ENCODE measurements at regions of chr15 and their contacts with region 1.

Region 1: GRCh38 chr15:64093627-64094417 is at the start of gene CIAO2A:
- DNase-seq: peak; percentile 96
- ATAC-seq: peak; percentile 70
- H3K4me3 ChIP-seq: peak within 1 kb of the TSS; percentile 76 to 94 (median 84)
- H3K4me3 Mint-ChIP-seq: peak within 1 kb of the TSS; percentile 97
- H3K27ac ChIP-seq: peak within 1 kb of the TSS; percentile 90 to 95
- H3K27ac Mint-ChIP-seq: peak within 1 kb of the TSS; percentile 98
- H3K4me1 ChIP-seq: peaks cover 79% of the 10 kb centered on the region in 2 donors
- H3K4me1 Mint-ChIP-seq: peaks cover 82% of the 10 kb centered on the region
- H3K27me3 ChIP-seq: no peaks in the 10 kb centered on the region
- H3K27me3 Mint-ChIP-seq: no peaks in the 10 kb centered on the region
- CTCF ChIP-seq: no peak
- total RNA-seq, gene CIAO2A: 64.4 and 68.2 TPM in 2 replicates

Region 2: DNA sequence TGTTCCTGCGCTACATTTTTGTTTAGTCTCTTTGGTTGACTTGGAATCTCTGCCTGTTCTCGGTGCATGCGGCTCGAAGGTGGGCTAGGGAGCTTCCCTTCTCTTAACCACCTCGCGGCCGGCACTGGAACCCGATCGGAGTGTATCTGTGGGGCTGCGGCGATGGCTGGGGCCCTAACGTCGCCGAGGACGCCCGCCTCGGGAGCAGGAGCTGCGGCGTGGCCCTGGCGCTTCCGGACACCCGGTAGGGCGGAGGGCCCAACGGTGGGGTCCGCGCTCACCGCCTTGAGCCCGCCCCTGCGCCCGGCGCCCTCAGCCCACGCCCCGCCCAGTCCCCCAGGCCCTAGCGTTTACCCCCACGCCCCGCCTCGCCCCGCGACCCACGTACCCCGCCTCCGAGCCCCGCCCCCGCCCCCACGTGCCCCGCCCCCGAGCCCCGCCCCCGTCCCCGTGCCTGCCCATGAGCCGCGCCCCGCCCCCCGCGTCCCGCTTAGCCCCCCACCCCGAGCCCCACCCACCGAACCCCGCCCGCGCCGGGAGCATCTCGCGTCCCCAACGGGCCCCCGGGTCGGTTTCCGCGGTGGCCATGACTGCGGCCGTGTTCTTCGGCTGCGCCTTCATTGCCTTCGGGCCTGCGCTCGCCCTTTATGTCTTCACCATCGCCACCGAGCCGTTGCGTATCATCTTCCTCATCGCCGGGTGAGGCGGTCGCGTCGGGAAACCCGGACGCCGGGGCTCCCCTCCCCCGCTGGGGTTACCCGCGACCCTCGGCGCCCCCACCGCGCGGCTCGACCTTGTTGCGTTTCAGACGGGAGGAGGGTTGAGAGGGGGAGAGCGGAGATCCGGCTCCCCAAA is 816.6 kb before region 1 on chr15 and contains the start of gene APH1B:
- CTCF ChIA-PET with region 1: no interaction called
- POLR2A ChIA-PET with region 1: no interaction called
- intact Hi-C with region 1: loop called (anchors 10 kb)
- DNase-seq: peak; percentile 85
- ATAC-seq: peak; percentile 97
- H3K4me3 ChIP-seq: peak within 1 kb of the TSS; percentile 74 to 98 (median 94)
- H3K4me3 Mint-ChIP-seq: peak within 1 kb of the TSS; percentile 92
- H3K27ac ChIP-seq: peak within 1 kb of the TSS; percentile 67 to 79
- H3K27ac Mint-ChIP-seq: peak within 1 kb of the TSS; percentile 94
- H3K4me1 ChIP-seq: peaks cover 12 to 14% of the 10 kb centered on the region in 2 donors
- H3K4me1 Mint-ChIP-seq: peaks cover 19% of the 10 kb centered on the region
- H3K27me3 ChIP-seq: no peaks in the 10 kb centered on the region
- H3K27me3 Mint-ChIP-seq: no peaks in the 10 kb centered on the region
- CTCF ChIP-seq: no peak
- total RNA-seq, gene APH1B: 45.2 and 47.0 TPM in 2 replicates

Region 3: GRCh38 chr15:63449731-63450130 is 644.1 kb before region 1 on chr15:
- CTCF ChIA-PET with region 1: no interaction called
- POLR2A ChIA-PET with region 1: no interaction called
- intact Hi-C with region 1: no loop called
- DNase-seq: no peak
- ATAC-seq: no peak
- H3K4me3 ChIP-seq: no peak overlapping the region
- H3K4me3 Mint-ChIP-seq: no peak overlapping the region
- H3K27ac ChIP-seq: no peak overlapping the region
- H3K27ac Mint-ChIP-seq: no peak overlapping the region
- H3K4me1 ChIP-seq: peaks cover 0 to 3% of the 10 kb centered on the region in 2 donors
- H3K4me1 Mint-ChIP-seq: peaks cover 3% of the 10 kb centered on the region
- H3K27me3 ChIP-seq: no peaks in the 10 kb centered on the region
- H3K27me3 Mint-ChIP-seq: peaks cover 2% of the 10 kb centered on the region
- CTCF ChIP-seq: no peak

Region 4: GRCh38 chr15:63600616-63601025 is 493.2 kb before region 1 on chr15:
- CTCF ChIA-PET with region 1: no interaction called
- POLR2A ChIA-PET with region 1: no interaction called
- intact Hi-C with region 1: loop called (anchors 5 kb)
- DNase-seq: peak; percentile 96
- ATAC-seq: peak; percentile 76
- H3K4me3 ChIP-seq: peak overlapping the region in 4 of 5 experiments; percentile 67 to 86 (median 74)
- H3K4me3 Mint-ChIP-seq: peak overlapping the region; percentile 96
- H3K27ac ChIP-seq: peak overlapping the region; percentile 65 to 76
- H3K27ac Mint-ChIP-seq: peak overlapping the region; percentile 96
- H3K4me1 ChIP-seq: peaks cover 44 to 57% of the 10 kb centered on the region in 2 donors
- H3K4me1 Mint-ChIP-seq: peaks cover 73% of the 10 kb centered on the region
- H3K27me3 ChIP-seq: no peaks in the 10 kb centered on the region
- H3K27me3 Mint-ChIP-seq: no peaks in the 10 kb centered on the region
- CTCF ChIP-seq: no peak

Region 5: DNA sequence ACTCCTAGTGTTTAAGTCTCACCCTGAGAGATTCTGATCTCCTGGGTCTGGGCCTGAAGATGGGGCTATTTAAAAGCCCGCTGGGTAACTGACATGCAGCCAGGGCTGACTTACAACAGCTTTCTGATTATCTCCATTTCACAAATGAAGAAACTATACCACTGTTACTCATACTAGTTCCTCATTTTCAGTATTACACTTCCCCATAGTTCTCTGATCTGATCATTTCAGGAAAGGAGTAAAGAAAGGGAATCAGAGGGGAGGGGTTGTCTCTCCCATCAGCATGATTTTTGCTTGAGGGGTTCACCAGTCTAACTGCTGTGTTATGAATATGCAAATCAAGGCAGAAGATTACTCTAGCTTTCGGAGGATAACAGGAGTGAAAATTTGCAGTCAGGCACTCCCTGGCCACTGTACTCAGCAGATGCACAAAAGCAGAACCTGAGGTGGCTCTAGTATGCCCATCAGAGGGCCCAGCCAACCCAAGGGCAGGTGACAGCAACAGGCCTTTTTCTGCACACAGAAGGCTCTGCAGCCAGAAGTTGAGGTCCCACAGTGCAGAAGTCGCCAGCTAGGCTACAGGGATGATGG is 107.0 kb before region 1 on chr15:
- CTCF ChIA-PET with region 1: no interaction called
- POLR2A ChIA-PET with region 1: no interaction called
- intact Hi-C with region 1: no loop called
- DNase-seq: peak; percentile 79
- ATAC-seq: peak; percentile 90
- H3K4me3 ChIP-seq: no peak overlapping the region
- H3K4me3 Mint-ChIP-seq: peak overlapping the region; percentile 70
- H3K27ac ChIP-seq: peak overlapping the region; percentile 57 to 63
- H3K27ac Mint-ChIP-seq: peak overlapping the region; percentile 96
- H3K4me1 ChIP-seq: peaks cover 46 to 56% of the 10 kb centered on the region in 2 donors
- H3K4me1 Mint-ChIP-seq: peaks cover 62% of the 10 kb centered on the region
- H3K27me3 ChIP-seq: no peaks in the 10 kb centered on the region
- H3K27me3 Mint-ChIP-seq: no peaks in the 10 kb centered on the region
- CTCF ChIP-seq: no peak

Region 6: GRCh38 chr15:64010719-64011118 is 83.1 kb before region 1 on chr15:
- CTCF ChIA-PET with region 1: interaction called, 7 read pairs
- POLR2A ChIA-PET with region 1: no interaction called
- intact Hi-C with region 1: loop called (anchors 1 kb)
- DNase-seq: peak; percentile 93
- ATAC-seq: peak; percentile 97
- H3K4me3 ChIP-seq: peak overlapping the region in 2 of 5 experiments; percentile 8 to 47
- H3K4me3 Mint-ChIP-seq: peak overlapping the region; percentile 87
- H3K27ac ChIP-seq: peak overlapping the region; percentile 63 to 77
- H3K27ac Mint-ChIP-seq: peak overlapping the region; percentile 97
- H3K4me1 ChIP-seq: peaks cover 27 to 36% of the 10 kb centered on the region in 2 donors
- H3K4me1 Mint-ChIP-seq: peaks cover 43% of the 10 kb centered on the region
- H3K27me3 ChIP-seq: no peaks in the 10 kb centered on the region
- H3K27me3 Mint-ChIP-seq: no peaks in the 10 kb centered on the region
- CTCF ChIP-seq: peak; percentile 51

Region 7: DNA sequence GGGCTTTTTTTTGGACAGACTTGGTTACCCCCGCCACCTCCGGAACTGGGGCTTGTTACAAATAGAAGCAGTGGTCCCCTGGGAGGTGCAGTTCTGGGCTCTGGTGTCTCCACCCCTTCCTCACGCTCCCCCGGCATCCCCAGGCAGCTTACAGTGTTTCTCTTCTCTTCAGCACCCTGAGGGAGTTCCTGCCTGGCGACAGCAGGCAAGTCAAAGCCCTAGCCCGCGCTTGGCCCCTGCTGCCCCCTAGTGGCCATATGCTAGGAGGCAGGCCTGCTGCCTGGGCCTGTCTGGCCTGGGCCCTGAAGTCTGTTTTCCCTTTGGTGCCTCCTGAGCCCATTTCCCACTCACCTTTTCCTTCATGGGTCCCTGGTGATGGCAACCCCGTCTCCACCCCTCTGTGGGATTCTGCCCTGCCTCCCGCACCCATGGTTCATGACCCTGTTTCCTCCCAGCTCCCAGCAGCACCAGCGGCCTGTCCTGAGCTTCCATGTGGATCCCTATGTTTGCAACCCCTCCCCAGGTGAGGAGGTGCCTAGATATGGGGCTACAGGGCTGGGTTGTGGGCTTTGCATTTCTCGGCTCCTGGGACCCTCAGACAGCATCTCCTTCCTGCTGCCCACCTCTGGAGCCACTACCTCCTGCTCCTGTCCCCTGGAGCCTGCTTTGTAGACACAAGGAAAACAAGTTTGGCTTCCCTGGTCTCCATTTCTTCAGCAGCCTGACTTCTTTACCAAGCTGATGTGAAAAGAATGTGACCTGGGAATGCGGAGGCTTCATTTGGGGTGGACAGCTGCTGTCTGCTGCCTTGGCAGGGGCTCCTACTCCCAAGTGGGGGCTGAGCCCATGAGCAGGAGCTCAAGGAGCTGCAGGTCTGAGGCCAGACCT is 59.9 kb after region 1 on chr15:
- CTCF ChIA-PET with region 1: interaction called, 33 read pairs
- POLR2A ChIA-PET with region 1: interaction called, 14 read pairs
- intact Hi-C with region 1: loop called (anchors 1 kb)
- DNase-seq: peak; percentile 97
- ATAC-seq: peak; percentile 82
- H3K4me3 ChIP-seq: peak overlapping the region in 4 of 5 experiments; percentile 91 to 96 (median 94)
- H3K4me3 Mint-ChIP-seq: peak overlapping the region; percentile 90
- H3K27ac ChIP-seq: peak overlapping the region; percentile 79 to 83
- H3K27ac Mint-ChIP-seq: peak overlapping the region; percentile 94
- H3K4me1 ChIP-seq: peaks cover 34 to 67% of the 10 kb centered on the region in 2 donors
- H3K4me1 Mint-ChIP-seq: peaks cover 76% of the 10 kb centered on the region
- H3K27me3 ChIP-seq: no peaks in the 10 kb centered on the region
- H3K27me3 Mint-ChIP-seq: no peaks in the 10 kb centered on the region
- CTCF ChIP-seq: peak; percentile 92

Region 8: GRCh38 chr15:64387562-64388168 is 293.8 kb after region 1 on chr15 and contains the start of gene TRIP4:
- CTCF ChIA-PET with region 1: no interaction called
- POLR2A ChIA-PET with region 1: no interaction called
- intact Hi-C with region 1: loop called (anchors 2 kb)
- DNase-seq: peak; percentile 96
- ATAC-seq: peak; percentile 100
- H3K4me3 ChIP-seq: peak within 1 kb of the TSS; percentile 63 to 97 (median 82)
- H3K4me3 Mint-ChIP-seq: peak within 1 kb of the TSS; percentile 97
- H3K27ac ChIP-seq: peak within 1 kb of the TSS; percentile 58 to 70
- H3K27ac Mint-ChIP-seq: peak within 1 kb of the TSS; percentile 95
- H3K4me1 ChIP-seq: peaks cover 10 to 18% of the 10 kb centered on the region in 2 donors
- H3K4me1 Mint-ChIP-seq: peaks cover 15% of the 10 kb centered on the region
- H3K27me3 ChIP-seq: no peaks in the 10 kb centered on the region
- H3K27me3 Mint-ChIP-seq: no peaks in the 10 kb centered on the region
- CTCF ChIP-seq: no peak
- total RNA-seq, gene TRIP4: 35.7 and 38.2 TPM in 2 replicates

Measured in B cell (primary cell).